Activated CD4-positive, alpha-beta memory T cell treated with anti-CD3 and anti-CD28 coated beads for 36 hours (primary cell): ENCODE measurements at regions of chr18 and their contacts with region 1.

Region 1: DNA sequence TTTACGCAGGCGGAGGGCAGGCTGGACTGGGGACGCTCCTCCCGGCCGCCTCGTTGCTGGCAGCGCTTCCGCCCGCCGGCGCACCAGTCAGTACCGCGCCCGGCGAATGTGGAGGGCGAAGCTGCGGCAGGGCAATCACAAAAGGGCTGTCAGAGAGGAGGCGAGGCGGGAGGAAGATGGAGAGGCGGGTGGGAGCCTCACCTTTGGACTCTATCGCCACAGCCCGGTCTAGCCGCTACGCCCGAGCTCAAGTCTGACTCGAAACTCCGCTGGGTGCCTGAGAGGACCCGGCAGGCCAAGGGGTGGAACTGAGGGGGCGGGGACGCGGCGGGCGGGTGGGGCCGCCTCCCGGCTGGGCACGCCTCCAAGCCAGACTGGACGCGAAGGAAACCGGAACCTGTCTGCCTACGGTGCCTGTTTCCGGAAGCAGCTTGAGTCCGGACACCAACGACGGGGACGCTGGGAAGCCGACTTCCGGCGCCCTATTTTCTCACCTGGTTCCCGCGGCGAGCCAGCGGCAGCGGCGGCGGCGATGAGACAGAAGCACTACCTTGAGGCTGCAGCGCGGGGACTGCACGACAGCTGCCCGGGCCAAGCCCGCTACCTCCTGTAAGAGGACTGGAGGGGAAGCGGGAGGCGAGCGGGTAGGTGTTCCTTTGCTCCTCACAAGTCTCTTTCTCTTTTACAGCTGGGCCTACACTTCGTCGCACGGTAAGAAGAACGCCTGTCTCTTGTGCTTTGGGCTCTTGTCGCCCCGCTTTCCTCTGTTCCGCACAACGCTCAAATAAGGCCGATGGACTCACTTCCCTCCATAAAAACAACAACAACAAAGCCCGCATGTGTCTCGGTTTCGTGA is at the start of gene RMP24:
- DNase-seq: peak; percentile 97
- H3K4me3 Mint-ChIP-seq: peak within 1 kb of the TSS; percentile 95
- H3K27ac Mint-ChIP-seq: peak within 1 kb of the TSS; percentile 98
- H3K4me1 Mint-ChIP-seq: peaks cover 50% of the 10 kb centered on the region
- H3K27me3 Mint-ChIP-seq: no peaks in the 10 kb centered on the region

Region 2: GRCh38 chr18:35240664-35241447 is 731.6 kb before region 1 on chr18 and contains the start of gene ZNF397:
- CTCF ChIA-PET with region 1: no interaction called
- POLR2A ChIA-PET with region 1: interaction called, 3 read pairs
- intact Hi-C with region 1: loop called (anchors 2 kb)
- DNase-seq: peak; percentile 98
- H3K4me3 Mint-ChIP-seq: peak within 1 kb of the TSS; percentile 96
- H3K27ac Mint-ChIP-seq: peak within 1 kb of the TSS; percentile 98
- H3K4me1 Mint-ChIP-seq: peaks cover 26% of the 10 kb centered on the region
- H3K27me3 Mint-ChIP-seq: no peaks in the 10 kb centered on the region
- total RNA-seq, gene ZNF397: 19.2 to 19.6 TPM

Region 3: GRCh38 chr18:35343936-35344735 is 628.3 kb before region 1 on chr18 and contains the start of gene ZNF24:
- CTCF ChIA-PET with region 1: no interaction called
- POLR2A ChIA-PET with region 1: interaction called, 5 read pairs
- intact Hi-C with region 1: loop called (anchors 1 kb)
- DNase-seq: peak; percentile 95
- H3K4me3 Mint-ChIP-seq: peak within 1 kb of the TSS; percentile 87
- H3K27ac Mint-ChIP-seq: peak within 1 kb of the TSS; percentile 96
- H3K4me1 Mint-ChIP-seq: peaks cover 45% of the 10 kb centered on the region
- H3K27me3 Mint-ChIP-seq: no peaks in the 10 kb centered on the region
- total RNA-seq, gene ZNF24: 40.6 to 48.6 TPM

Region 4: DNA sequence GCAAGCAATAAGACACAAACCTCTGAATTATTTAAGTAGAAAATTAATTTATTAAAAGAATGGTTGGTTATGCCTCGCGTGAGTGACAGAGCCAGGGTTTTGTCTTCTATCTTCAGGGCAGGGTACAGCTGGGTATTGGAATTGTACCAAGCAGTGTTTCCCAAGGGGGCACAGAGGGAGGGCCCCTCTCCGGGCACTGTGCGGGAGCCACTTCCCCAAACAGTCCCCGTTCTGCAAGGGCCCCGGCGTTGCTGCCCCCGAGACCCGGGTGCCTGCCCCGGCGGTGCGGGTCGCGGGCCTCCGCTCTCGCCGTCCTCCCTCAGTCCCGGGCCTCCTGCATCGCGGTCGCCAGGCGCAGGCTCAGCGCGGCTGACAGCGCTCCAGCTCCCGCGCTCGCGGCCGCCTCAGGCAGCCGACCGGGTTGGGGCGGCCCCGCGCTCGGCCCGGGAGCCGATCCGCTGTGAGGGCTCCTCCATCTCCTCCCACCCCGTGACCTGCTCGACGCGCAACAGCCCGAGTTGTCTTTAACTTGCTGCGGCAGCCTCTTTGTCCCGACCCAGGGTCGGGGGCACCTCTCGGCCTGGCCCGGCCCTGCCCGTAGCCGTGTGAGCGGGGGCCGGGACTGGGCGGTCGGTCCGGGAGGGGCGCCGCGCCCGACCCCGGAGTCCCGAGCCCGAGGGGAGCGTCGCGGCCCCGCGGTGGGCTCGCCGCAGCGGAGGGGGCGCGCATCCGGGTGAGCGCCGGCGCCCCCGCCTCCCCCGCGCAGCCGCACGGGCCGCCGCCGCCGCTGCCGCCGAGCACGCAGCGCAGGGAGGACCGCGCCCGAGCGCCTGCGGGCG is 391.5 kb before region 1 on chr18:
- CTCF ChIA-PET with region 1: no interaction called
- POLR2A ChIA-PET with region 1: no interaction called
- intact Hi-C with region 1: loop called (anchors 5 kb)
- DNase-seq: peak; percentile 61
- H3K4me3 Mint-ChIP-seq: peak overlapping the region; percentile 68
- H3K27ac Mint-ChIP-seq: peak overlapping the region; percentile 53
- H3K4me1 Mint-ChIP-seq: peaks cover 34% of the 10 kb centered on the region
- H3K27me3 Mint-ChIP-seq: peaks cover 25% of the 10 kb centered on the region

Region 5: DNA sequence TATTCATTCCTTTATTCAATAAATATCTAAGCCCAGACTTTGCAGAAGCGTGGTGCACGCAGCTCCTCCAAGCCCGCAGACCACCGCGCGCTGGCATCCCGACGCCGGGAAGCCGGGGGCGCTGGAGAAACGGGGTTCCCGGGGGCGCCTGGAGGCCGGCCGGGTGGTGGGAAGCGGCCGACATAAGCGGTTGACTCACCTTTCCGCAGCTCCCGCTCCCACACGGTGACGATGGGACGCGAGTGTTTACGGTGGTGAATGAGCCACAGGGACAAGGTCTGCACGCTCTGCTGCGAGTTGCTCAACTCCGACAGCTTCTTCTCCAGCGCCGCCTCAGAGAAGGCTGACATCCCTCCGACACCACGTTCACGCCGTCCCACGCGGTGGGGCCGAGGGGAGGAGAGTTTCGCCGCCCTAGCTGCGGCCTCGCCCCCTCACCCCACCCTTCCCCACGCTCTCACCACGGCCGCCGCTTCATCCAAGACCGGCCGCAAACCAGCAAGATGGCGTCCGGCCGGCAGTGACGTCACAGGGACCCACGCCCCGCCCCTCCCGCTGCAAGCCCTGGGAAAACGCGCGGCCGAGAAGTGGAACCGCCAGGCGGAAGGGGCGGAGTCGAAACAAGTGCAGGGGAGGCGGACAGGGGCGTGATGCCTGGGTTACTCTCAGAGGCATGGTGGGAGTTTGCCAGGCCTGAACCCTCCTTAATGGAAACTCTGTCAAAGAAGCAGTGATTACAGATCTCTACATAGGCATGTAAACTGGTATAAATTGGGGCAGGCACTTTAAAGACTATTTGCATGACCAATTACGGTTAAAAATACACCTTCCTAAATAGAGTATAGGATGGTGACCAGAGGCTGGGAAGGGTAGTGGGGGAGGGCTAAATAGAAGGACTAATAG is 94.9 kb after region 1 on chr18 and contains the start of gene RPRD1A:
- CTCF ChIA-PET with region 1: no interaction called
- POLR2A ChIA-PET with region 1: interaction called, 5 read pairs
- intact Hi-C with region 1: loop called (anchors 1 kb)
- DNase-seq: peak; percentile 98
- H3K4me3 Mint-ChIP-seq: peak within 1 kb of the TSS; percentile 92
- H3K27ac Mint-ChIP-seq: peak within 1 kb of the TSS; percentile 94
- H3K4me1 Mint-ChIP-seq: peaks cover 36% of the 10 kb centered on the region
- H3K27me3 Mint-ChIP-seq: no peaks in the 10 kb centered on the region
- total RNA-seq, gene RPRD1A: 25.9 to 29.6 TPM

Region 6: DNA sequence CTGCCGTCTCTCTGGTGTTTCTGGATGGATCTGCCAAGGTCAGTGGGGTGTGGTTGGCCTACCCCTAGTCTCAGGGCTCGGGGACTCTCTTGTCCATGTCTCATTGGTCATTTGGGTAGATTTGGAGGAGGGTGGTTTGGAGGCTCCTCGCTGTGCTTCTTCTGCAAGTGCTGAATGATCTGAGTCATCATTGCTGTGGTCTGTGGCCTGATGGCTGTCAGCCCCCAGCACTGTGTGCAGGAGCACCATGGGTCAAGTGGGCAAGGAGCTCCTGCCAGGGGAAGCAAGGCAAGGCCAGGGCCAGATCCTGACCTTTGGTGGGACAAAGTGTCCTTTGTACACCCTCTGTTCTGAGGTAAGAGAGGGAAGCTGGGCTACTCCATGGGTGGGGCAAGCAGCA is 546.9 kb after region 1 on chr18:
- CTCF ChIA-PET with region 1: no interaction called
- POLR2A ChIA-PET with region 1: no interaction called
- intact Hi-C with region 1: no loop called
- DNase-seq: no peak
- H3K4me3 Mint-ChIP-seq: no peak overlapping the region
- H3K27ac Mint-ChIP-seq: no peak overlapping the region
- H3K4me1 Mint-ChIP-seq: no peaks in the 10 kb centered on the region
- H3K27me3 Mint-ChIP-seq: peaks cover 17% of the 10 kb centered on the region

Region 7: DNA sequence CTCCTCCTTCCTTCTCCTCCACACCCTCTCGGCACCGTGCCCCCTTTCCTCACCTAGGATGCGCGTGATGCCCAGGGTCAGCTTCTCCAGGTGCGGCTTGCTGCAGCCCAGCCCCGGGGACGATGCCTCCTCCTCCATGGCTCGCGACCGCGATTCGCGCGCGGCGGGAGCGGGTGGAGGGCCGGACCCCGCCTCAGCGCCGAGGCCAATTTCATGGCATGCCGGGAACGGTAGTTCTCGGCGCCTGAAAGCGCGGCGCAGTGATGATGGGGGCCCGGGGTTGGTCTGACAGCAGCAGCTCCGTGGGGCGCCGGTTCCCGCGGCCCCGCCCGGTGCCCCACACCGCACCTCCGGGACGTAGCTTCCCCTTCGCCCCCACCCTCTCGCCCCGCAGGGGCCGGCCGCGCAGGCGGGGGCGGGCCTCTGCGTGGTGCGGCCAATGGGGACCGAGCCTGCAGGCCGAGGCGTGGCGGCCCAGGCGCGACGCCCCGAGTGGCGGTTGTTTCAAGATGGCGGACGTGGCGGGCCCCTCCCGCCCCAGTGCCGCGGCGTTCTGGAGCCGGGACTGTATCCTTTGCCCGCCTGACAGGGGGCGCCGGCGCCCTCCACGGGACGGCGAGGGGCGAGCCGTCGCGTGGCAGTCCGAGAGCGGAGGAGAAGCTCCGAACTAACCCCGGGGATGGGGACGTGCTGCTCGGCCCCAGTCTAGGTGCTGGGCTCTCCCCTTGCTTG is 856.4 kb after region 1 on chr18 and contains the starts of genes KIAA1328 and TPGS2:
- CTCF ChIA-PET with region 1: no interaction called
- POLR2A ChIA-PET with region 1: no interaction called
- intact Hi-C with region 1: loop called (anchors 1 kb)
- DNase-seq: peak; percentile 93
- H3K4me3 Mint-ChIP-seq: peak within 1 kb of the TSS; percentile 98
- H3K27ac Mint-ChIP-seq: peak within 1 kb of the TSS; percentile 91
- H3K4me1 Mint-ChIP-seq: peaks cover 38% of the 10 kb centered on the region
- H3K27me3 Mint-ChIP-seq: no peaks in the 10 kb centered on the region
- total RNA-seq, gene KIAA1328: 7.3 to 7.8 TPM
- total RNA-seq, gene TPGS2: 77.9 to 83.0 TPM